B cell (primary cell): ENCODE measurements at regions of chr7 and their contacts with region 1.

Region 1: DNA sequence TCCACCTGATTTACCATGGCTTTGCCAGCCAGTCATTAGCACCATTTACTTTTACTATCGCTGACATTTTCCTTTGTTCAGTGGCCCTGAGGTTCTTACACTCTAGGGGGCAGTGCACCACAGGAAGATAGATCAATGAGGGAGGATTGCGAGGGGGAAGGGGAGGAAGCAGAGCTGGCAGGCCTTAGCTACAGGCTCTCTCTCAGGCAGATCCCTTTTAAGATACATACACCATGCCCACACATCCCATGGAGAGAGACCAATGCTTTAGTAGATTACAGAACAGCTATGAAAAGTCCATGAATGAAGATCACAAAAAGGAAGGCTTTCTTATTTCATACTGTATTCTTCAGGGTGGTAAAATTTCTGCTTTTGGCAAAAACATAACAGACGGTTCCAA is 47.4 kb downstream of the DENND11 start:
- DNase-seq: peak; percentile 75
- ATAC-seq: peak; percentile 72
- H3K4me3 ChIP-seq: no peak overlapping the region
- H3K4me3 Mint-ChIP-seq: no peak overlapping the region
- H3K27ac ChIP-seq: peak overlapping the region in 1 of 2 donors; percentile 7
- H3K27ac Mint-ChIP-seq: peak overlapping the region; percentile 51
- H3K4me1 ChIP-seq: peaks cover 2 to 7% of the 10 kb centered on the region in 2 donors
- H3K4me1 Mint-ChIP-seq: peaks cover 13% of the 10 kb centered on the region
- H3K27me3 ChIP-seq: no peaks in the 10 kb centered on the region
- H3K27me3 Mint-ChIP-seq: no peaks in the 10 kb centered on the region
- CTCF ChIP-seq: peak; percentile 72

Region 2: GRCh38 chr7:140924019-140924820 is 730.3 kb before region 1 on chr7:
- CTCF ChIA-PET with region 1: no interaction called
- POLR2A ChIA-PET with region 1: no interaction called
- intact Hi-C with region 1: loop called (anchors 1 kb)
- DNase-seq: peak; percentile 97
- ATAC-seq: peak; percentile 74
- H3K4me3 ChIP-seq: peak overlapping the region; percentile 73 to 92 (median 92)
- H3K4me3 Mint-ChIP-seq: no peak overlapping the region
- H3K27ac ChIP-seq: peak overlapping the region; percentile 93 to 98
- H3K27ac Mint-ChIP-seq: no peak overlapping the region
- H3K4me1 ChIP-seq: peaks cover 16 to 27% of the 10 kb centered on the region in 2 donors
- H3K4me1 Mint-ChIP-seq: peaks cover 21% of the 10 kb centered on the region
- H3K27me3 ChIP-seq: no peaks in the 10 kb centered on the region
- H3K27me3 Mint-ChIP-seq: no peaks in the 10 kb centered on the region
- CTCF ChIP-seq: peak; percentile 48

Region 3: DNA sequence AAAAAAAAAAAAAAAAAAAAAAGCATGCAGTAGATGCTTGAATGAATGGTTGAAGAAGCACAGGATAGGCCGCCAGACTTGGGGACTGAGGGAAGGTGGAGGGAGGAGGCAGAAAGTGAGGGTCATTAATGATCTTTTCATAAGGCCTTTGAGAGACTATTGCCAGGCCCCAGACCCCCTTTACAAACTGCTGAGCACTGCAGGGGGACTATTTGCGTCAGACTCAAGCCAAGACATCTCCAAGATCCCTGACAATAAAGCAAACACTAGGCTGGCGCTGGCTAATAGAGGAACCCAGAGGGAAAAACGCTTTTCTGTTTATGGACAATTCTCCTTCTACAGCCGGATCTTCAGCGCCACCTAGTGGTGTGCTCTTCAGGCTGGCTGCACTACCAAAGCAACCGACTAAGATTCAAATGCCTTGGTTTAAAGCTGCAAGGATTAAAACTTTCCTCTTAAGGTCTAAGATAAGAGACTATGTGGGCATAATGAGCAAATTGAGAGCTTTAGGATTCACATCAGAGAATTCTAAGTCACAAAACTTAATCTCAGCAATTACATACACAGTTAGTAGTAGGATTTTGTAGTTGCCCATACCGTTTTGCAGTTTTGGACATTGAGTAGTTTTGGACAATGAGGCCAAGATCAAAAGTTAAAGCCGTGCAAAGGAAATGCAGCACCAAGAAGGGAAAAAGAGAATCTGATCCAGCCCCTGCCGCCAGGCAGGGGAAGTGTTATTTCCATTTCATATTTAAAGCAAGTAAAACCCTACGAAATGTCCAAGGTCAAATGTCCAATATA is 121.2 kb before region 1 on chr7:
- CTCF ChIA-PET with region 1: interaction called, 10 read pairs
- POLR2A ChIA-PET with region 1: no interaction called
- intact Hi-C with region 1: loop called (anchors 2 kb)
- DNase-seq: peak; percentile 67
- ATAC-seq: peak; percentile 63
- H3K4me3 ChIP-seq: no peak overlapping the region
- H3K4me3 Mint-ChIP-seq: no peak overlapping the region
- H3K27ac ChIP-seq: no peak overlapping the region
- H3K27ac Mint-ChIP-seq: no peak overlapping the region
- H3K4me1 ChIP-seq: no peaks in the 10 kb centered on the region
- H3K4me1 Mint-ChIP-seq: no peaks in the 10 kb centered on the region
- H3K27me3 ChIP-seq: peaks cover 0 to 16% (median 7%) of the 10 kb centered on the region in 4 experiments
- H3K27me3 Mint-ChIP-seq: peaks cover 37% of the 10 kb centered on the region
- CTCF ChIP-seq: peak; percentile 95

Region 4: DNA sequence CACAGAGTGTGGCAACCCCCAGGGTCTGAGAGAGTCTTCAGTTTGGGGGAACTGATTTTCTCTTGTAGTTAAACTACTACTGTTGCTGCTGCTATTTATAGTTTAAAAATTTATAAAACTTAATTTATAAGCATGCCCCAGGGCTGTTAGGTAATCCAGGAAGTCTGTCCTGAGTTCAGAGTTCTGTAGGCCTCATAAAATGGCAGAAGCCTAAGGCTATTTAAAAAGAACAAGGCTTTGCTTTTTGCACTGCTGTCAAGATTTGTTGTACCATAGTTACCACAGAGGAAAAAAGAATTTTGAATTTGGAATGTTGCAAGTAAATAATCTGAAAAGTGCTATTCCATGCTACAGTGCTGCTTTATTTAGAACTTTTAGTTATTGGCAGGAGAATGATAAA is 37.3 kb before region 1 on chr7:
- CTCF ChIA-PET with region 1: no interaction called
- POLR2A ChIA-PET with region 1: no interaction called
- intact Hi-C with region 1: loop called (anchors 2 kb)
- DNase-seq: no peak
- ATAC-seq: no peak
- H3K4me3 ChIP-seq: no peak overlapping the region
- H3K4me3 Mint-ChIP-seq: no peak overlapping the region
- H3K27ac ChIP-seq: no peak overlapping the region
- H3K27ac Mint-ChIP-seq: no peak overlapping the region
- H3K4me1 ChIP-seq: no peaks in the 10 kb centered on the region
- H3K4me1 Mint-ChIP-seq: no peaks in the 10 kb centered on the region
- H3K27me3 ChIP-seq: no peaks in the 10 kb centered on the region
- H3K27me3 Mint-ChIP-seq: no peaks in the 10 kb centered on the region
- CTCF ChIP-seq: no peak

Region 5: GRCh38 chr7:141710301-141710700 is 55.8 kb after region 1 on chr7:
- CTCF ChIA-PET with region 1: interaction called, 20 read pairs
- POLR2A ChIA-PET with region 1: no interaction called
- intact Hi-C with region 1: loop called (anchors 2 kb)
- DNase-seq: no peak
- ATAC-seq: no peak
- H3K4me3 ChIP-seq: no peak overlapping the region
- H3K4me3 Mint-ChIP-seq: no peak overlapping the region
- H3K27ac ChIP-seq: no peak overlapping the region
- H3K27ac Mint-ChIP-seq: no peak overlapping the region
- H3K4me1 ChIP-seq: no peaks in the 10 kb centered on the region
- H3K4me1 Mint-ChIP-seq: no peaks in the 10 kb centered on the region
- H3K27me3 ChIP-seq: no peaks in the 10 kb centered on the region
- H3K27me3 Mint-ChIP-seq: peaks cover 4% of the 10 kb centered on the region
- CTCF ChIP-seq: no peak

Region 6: DNA sequence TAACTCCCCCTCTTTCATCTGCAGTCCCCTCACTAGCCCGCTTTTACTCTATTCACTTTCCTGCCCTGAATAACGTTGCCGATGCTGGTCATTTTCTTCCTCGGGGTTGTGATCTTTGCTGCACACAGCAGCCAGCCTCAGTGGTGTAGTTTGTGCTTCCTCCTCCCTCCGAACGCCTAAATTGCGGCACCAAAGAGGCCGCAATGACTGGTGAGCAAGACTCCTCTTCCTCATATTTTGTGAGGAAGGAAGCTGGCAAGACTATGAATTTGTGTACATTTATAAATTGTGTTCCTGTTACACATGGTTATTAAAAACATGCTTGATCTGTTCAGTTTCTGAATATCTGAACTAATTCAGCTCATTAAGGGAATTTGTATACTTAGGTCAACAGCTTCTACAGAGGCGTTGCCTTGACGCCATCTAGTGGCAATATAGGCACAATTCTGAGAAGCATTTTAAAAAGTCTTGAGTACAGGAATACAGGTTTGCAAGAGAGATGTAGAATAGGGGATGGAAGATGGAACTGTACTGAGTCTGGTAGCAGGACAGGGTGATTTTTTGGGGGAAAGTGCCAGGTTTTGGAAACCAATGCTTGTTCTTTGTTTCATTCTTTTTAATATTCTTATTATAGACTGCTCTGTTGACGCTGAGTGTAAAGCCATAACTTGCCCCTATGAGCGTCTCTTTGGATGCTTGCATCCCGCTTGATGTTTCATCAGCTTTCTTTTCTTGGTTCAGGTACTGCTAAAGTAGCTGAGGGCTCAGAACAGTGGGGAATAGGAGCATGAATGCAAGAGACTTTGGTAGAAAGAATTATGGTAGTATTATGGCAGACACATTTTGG is 131.4 kb after region 1 on chr7:
- CTCF ChIA-PET with region 1: interaction called, 48 read pairs
- POLR2A ChIA-PET with region 1: no interaction called
- intact Hi-C with region 1: no loop called
- DNase-seq: peak; percentile 55
- ATAC-seq: no peak
- H3K4me3 ChIP-seq: no peak overlapping the region
- H3K4me3 Mint-ChIP-seq: no peak overlapping the region
- H3K27ac ChIP-seq: no peak overlapping the region
- H3K27ac Mint-ChIP-seq: no peak overlapping the region
- H3K4me1 ChIP-seq: no peaks in the 10 kb centered on the region
- H3K4me1 Mint-ChIP-seq: no peaks in the 10 kb centered on the region
- H3K27me3 ChIP-seq: no peaks in the 10 kb centered on the region
- H3K27me3 Mint-ChIP-seq: no peaks in the 10 kb centered on the region
- CTCF ChIP-seq: peak; percentile 87